SK-N-SH (cell line): ENCODE measurements at regions of chr11 and their contacts with region 1.

Region 1: GRCh38 chr11:30346068-30346688 is 23.3 kb downstream of the ARL14EP start:
- DNase-seq: peak; percentile 43
- H3K4me3 ChIP-seq: no peak overlapping the region
- H3K27ac ChIP-seq: no peak overlapping the region
- H3K4me1 ChIP-seq: no peaks in the 10 kb centered on the region; a peak in 1 of 4 replicates
- H3K27me3 ChIP-seq: no peaks in the 10 kb centered on the region
- CTCF ChIP-seq: peak; percentile 74
- EP300 ChIP-seq: no peak
- RAD21 ChIP-seq: peak; percentile 85

Region 2: GRCh38 chr11:30333405-30333804 is 12.8 kb before region 1 on chr11:
- CTCF ChIA-PET with region 1: interaction called, 14 read pairs
- POLR2A ChIA-PET with region 1: no interaction called
- DNase-seq: peak; percentile 9
- H3K4me3 ChIP-seq: no peak overlapping the region
- H3K27ac ChIP-seq: no peak overlapping the region
- H3K4me1 ChIP-seq: peaks cover 0 to 10% of the 10 kb centered on the region in 2 experiments; a peak in 2 of 4 replicates
- H3K27me3 ChIP-seq: no peaks in the 10 kb centered on the region
- CTCF ChIP-seq: peak; percentile 67
- EP300 ChIP-seq: no peak
- RAD21 ChIP-seq: peak; percentile 44

Region 3: DNA sequence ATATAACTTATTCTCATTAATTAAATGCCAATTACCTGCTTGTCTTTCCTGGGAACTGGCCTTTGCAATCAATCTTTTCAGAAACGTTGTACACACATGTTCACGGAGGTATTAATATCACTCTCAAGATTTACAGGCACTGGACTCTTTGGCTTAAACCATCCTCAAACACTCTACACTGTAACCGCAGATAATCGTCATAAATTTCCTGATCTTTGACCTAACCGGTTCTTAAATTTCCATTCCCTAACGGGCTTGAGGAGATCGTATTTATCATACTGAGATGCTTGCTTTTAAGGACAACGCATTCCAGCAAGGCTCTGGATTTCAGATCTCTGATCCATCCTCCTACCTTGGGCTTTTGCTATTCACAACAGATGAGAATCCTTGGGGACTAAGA is 49.6 kb after region 1 on chr11:
- CTCF ChIA-PET with region 1: no interaction called
- POLR2A ChIA-PET with region 1: no interaction called
- DNase-seq: no peak
- H3K4me3 ChIP-seq: no peak overlapping the region
- H3K27ac ChIP-seq: no peak overlapping the region
- H3K4me1 ChIP-seq: peaks cover 0 to 3% of the 10 kb centered on the region in 2 experiments; a peak in 2 of 4 replicates
- H3K27me3 ChIP-seq: no peaks in the 10 kb centered on the region
- CTCF ChIP-seq: no peak
- EP300 ChIP-seq: no peak
- RAD21 ChIP-seq: no peak

Region 4: GRCh38 chr11:30411383-30411782 is 65.2 kb after region 1 on chr11:
- CTCF ChIA-PET with region 1: no interaction called
- POLR2A ChIA-PET with region 1: no interaction called
- DNase-seq: no peak
- H3K4me3 ChIP-seq: no peak overlapping the region
- H3K27ac ChIP-seq: no peak overlapping the region
- H3K4me1 ChIP-seq: peaks cover 0 to 2% of the 10 kb centered on the region in 2 experiments; a peak in 1 of 4 replicates
- H3K27me3 ChIP-seq: no peaks in the 10 kb centered on the region; the same call in 1 of the 2 replicates
- CTCF ChIP-seq: no peak
- EP300 ChIP-seq: no peak
- RAD21 ChIP-seq: no peak

Region 5: GRCh38 chr11:30445056-30445455 is 98.9 kb after region 1 on chr11:
- CTCF ChIA-PET with region 1: no interaction called
- POLR2A ChIA-PET with region 1: no interaction called
- DNase-seq: no peak
- H3K4me3 ChIP-seq: no peak overlapping the region
- H3K27ac ChIP-seq: no peak overlapping the region
- H3K4me1 ChIP-seq: no peaks in the 10 kb centered on the region
- H3K27me3 ChIP-seq: no peaks in the 10 kb centered on the region
- CTCF ChIP-seq: no peak
- EP300 ChIP-seq: no peak
- RAD21 ChIP-seq: no peak